HepG2 (cell line): ENCODE measurements at regions of chr1 and their contacts with region 1.

Region 1: GRCh38 chr1:71093938-71094337 is 13.1 kb upstream of the ZRANB2 start:
- DNase-seq: no peak
- ATAC-seq: no peak
- H3K4me3 ChIP-seq: no peak overlapping the region
- H3K27ac ChIP-seq: no peak overlapping the region
- H3K4me1 ChIP-seq: no peaks in the 10 kb centered on the region
- H3K27me3 ChIP-seq: no peaks in the 10 kb centered on the region
- CTCF ChIP-seq: peak; percentile 18; the same call in 1 of the 2 replicates
- EP300 ChIP-seq: no peak
- POLR2A ChIP-seq: no peak
- RAD21 ChIP-seq: no peak

Region 2: GRCh38 chr1:71054281-71054732 is 39.6 kb before region 1 on chr1:
- CTCF ChIA-PET with region 1: no interaction called
- POLR2A ChIA-PET with region 1: no interaction called
- in situ Hi-C with region 1: no loop called
- intact Hi-C with region 1: no loop called
- DNase-seq: no peak
- ATAC-seq: peak; percentile 45
- H3K4me3 ChIP-seq: no peak overlapping the region
- H3K27ac ChIP-seq: no peak overlapping the region
- H3K4me1 ChIP-seq: no peaks in the 10 kb centered on the region
- H3K27me3 ChIP-seq: no peaks in the 10 kb centered on the region
- CTCF ChIP-seq: no peak
- EP300 ChIP-seq: no peak
- POLR2A ChIP-seq: peak in 1 of 2 experiments; percentile 51; a peak in 2 of 4 replicates
- RAD21 ChIP-seq: no peak

Region 3: DNA sequence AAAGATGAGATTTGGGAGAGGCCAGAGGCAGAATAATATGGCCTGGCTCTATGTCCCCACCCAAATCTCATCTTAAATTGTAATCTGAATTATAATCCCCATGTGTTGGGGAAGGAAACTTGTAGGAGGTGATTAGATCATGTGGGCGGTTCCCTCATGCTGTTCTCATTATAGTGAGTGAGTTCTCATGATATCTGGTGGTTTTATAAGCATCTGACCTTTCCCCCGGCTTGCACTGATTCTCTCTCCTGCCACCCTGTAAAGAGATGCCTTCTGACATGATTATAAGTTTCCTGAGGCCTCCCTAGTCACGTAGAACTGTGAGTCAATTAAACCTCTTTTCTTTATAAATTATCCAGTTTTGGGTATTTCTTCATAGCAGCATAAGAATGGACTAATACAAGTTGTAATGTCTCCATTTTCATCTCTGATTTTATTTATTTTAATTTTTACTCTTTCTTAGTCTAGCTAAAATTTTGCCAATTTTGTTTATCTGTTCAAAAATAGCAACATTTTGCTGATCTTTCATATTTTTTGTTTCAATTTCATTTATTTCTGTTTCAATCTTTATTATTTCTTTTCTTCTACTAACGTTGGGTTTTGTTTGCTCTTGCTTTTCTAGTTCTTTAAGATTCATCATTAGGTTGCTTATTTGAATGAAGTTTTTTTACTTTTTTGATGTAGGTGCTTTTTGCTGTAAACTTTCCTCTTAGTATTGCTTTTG is 53.9 kb after region 1 on chr1:
- CTCF ChIA-PET with region 1: no interaction called
- POLR2A ChIA-PET with region 1: no interaction called
- in situ Hi-C with region 1: no loop called
- intact Hi-C with region 1: loop called (anchors 2 kb)
- DNase-seq: no peak
- ATAC-seq: no peak
- H3K4me3 ChIP-seq: no peak overlapping the region
- H3K27ac ChIP-seq: no peak overlapping the region
- H3K4me1 ChIP-seq: no peaks in the 10 kb centered on the region
- H3K27me3 ChIP-seq: no peaks in the 10 kb centered on the region
- CTCF ChIP-seq: no peak
- EP300 ChIP-seq: no peak
- POLR2A ChIP-seq: no peak
- RAD21 ChIP-seq: no peak

Region 4: GRCh38 chr1:71521655-71522264 is 427.8 kb after region 1 on chr1:
- CTCF ChIA-PET with region 1: interaction called, 3 read pairs
- POLR2A ChIA-PET with region 1: no interaction called
- in situ Hi-C with region 1: no loop called
- intact Hi-C with region 1: loop called (anchors 5 kb)
- DNase-seq: peak; percentile 2
- ATAC-seq: peak; percentile 48; the same call in 1 of the 3 replicates
- H3K4me3 ChIP-seq: no peak overlapping the region
- H3K27ac ChIP-seq: no peak overlapping the region
- H3K4me1 ChIP-seq: no peaks in the 10 kb centered on the region
- H3K27me3 ChIP-seq: no peaks in the 10 kb centered on the region
- CTCF ChIP-seq: peak; percentile 42
- EP300 ChIP-seq: no peak
- POLR2A ChIP-seq: no peak
- RAD21 ChIP-seq: no peak